ENCODE measurements at regions of chr7 and their contacts with region 1.

Region 1: GRCh38 chr7:130010689-130011412 is 40.3 kb downstream of the ZC3HC1 start:
- DNase-seq: peak; percentile 63 to 86
- ATAC-seq: peak; percentile 68

Region 2: DNA sequence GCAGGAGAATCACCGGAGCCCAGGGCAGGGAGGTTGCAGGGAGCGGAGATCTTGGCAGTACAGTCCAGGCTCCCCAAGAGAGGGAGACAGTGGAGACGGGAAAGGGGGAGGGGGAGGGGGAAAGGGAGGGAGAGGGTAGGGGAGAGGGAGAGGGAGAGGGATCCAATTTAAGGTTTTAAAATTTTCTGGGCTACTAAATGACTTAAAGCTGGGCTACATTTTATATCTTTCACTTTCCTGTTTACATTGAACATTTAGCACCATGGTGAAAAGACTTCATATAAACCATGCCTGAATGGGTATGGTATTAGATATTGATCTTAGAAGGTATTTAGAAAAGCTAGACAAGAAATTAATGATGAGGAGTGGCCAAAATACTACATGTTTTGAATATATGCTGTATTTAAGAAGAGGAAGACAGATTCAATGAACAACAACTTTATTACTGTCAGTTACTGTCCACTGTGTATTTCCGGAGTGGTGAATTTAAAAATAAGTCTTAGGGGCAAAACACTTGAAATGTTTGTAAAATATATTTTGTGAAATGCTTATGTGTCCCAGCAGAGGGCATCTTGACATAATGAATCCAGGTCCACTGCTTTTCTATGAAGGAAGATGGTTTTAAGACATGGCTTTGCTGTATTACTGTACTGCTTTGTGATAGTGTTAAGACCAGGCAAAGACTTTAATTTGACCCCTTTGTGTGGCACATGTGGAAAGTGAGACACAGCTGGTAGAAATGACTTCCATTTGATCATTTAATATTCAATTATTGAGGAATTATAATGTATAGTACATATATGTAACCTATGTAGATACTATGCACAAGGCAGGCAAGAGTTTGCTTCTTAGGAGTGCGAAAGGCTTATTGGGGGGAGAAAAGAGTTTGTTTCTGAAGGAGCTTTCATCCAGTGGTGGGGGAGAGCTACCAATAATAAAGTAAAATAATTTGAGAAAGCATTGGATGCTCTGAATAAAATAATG is 346.5 kb before region 1 on chr7:
- intact Hi-C with region 1: loop called in 1 of 2 experiments (anchors 10 kb)
- DNase-seq: no peak
- ATAC-seq: peak; percentile 61

Region 3: GRCh38 chr7:129825496-129826267 is 185.2 kb before region 1 on chr7:
- intact Hi-C with region 1: loop called in 1 of 2 experiments (anchors 10 kb)
- DNase-seq: peak; percentile 86 to 95
- ATAC-seq: peak; percentile 85

Region 4: DNA sequence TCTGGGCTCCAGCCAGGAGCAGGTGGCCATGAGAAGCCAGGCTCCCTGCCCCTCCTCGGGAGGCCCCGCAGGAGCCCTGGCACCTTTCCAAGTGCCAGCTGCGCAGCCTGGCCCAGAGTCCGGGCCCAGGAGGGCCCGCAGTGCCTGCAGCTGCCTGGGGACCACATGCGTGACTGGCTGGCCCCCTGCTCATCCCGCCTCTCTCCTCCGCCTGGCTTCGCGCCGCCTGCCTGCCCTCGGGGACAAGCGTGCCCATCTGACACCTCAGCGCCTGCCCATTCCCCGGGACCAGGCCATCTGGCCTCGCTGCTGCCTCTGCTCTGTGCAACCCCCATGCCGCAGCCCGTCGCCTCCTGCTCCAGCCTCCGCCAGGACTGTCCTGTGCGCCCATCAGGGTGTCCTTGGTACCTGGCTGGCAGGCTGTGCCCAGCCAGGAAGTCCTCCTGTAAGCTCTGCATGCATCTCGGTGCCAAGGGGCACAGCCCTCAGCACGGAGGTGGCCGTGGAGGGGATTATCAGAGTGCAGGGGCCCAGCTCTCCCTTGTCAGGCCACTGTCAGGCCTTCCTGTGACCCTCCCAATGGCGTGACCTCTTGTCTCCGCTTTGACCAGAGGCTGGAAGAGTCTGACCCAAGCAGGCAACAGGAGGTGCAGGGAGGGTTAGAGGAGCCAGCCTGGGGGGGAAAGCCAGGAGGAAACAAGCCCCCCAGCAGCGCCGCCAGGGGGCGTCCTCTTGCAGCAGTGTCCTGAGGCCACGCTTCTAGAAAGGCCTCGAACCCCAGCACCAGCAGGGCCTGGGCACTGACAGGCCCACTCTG is 143.9 kb after region 1 on chr7:
- intact Hi-C with region 1: no loop called
- DNase-seq: peak in 1 of 2 donors; percentile 43
- ATAC-seq: peak; percentile 54

Measured in left colon (tissue), 2 donors.